Activated CD4-positive, alpha-beta T cell treated with anti-CD3 and anti-CD28 coated beads, Interleukin-2, amount 10 ng/mL, durations not matched to agents 24 days and 14 days (primary cell): ENCODE measurements at regions of chr21 and their contacts with region 1.

Region 1: DNA sequence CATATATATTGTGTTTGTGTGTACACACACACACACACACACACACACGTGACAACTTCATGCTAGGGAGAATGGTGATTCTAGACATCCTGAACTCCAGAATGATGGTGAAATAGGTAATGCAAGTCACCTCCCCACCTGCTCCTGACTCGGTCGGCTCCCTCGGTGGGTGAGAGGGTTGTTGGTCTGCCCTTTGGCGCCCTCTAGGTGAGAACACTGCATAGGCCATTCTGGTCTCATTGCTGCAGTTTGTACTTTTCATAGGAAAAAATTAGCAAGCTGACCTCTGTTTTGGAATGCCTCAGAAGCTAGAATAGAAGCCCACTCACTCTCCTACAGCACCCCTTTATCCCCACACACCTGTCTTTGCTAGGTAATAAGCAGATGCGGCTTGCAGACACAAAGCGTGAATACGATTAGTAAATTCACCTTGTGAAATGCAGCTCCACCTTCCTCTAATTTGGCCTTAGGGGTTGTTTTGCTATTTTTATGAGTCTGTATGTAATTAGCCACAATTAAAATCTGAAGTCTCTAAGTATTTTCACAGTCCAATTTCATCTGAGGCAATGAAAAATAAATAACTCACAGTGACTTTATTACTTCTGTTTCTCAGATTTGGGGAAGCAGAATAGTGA is 130.0 kb upstream of the KCNJ15 start:
- DNase-seq: peak; percentile 85
- H3K4me3 Mint-ChIP-seq: no peak overlapping the region
- H3K27ac Mint-ChIP-seq: no peak overlapping the region
- H3K4me1 Mint-ChIP-seq: no peaks in the 10 kb centered on the region
- H3K27me3 Mint-ChIP-seq: peaks cover 14% of the 10 kb centered on the region

Region 2: GRCh38 chr21:36282568-36283230 is 1844.1 kb before region 1 on chr21:
- intact Hi-C with region 1: no loop called
- DNase-seq: no peak
- H3K4me3 Mint-ChIP-seq: no peak overlapping the region
- H3K27ac Mint-ChIP-seq: no peak overlapping the region
- H3K4me1 Mint-ChIP-seq: peaks cover 5% of the 10 kb centered on the region
- H3K27me3 Mint-ChIP-seq: no peaks in the 10 kb centered on the region

Region 3: GRCh38 chr21:37130971-37131370 is 995.8 kb before region 1 on chr21:
- intact Hi-C with region 1: no loop called
- DNase-seq: no peak
- H3K4me3 Mint-ChIP-seq: no peak overlapping the region
- H3K27ac Mint-ChIP-seq: no peak overlapping the region
- H3K4me1 Mint-ChIP-seq: peaks cover 7% of the 10 kb centered on the region
- H3K27me3 Mint-ChIP-seq: no peaks in the 10 kb centered on the region

Region 4: GRCh38 chr21:37711836-37712568 is 414.8 kb before region 1 on chr21:
- intact Hi-C with region 1: loop called (anchors 5 kb)
- DNase-seq: peak; percentile 78
- H3K4me3 Mint-ChIP-seq: no peak overlapping the region
- H3K27ac Mint-ChIP-seq: no peak overlapping the region
- H3K4me1 Mint-ChIP-seq: no peaks in the 10 kb centered on the region
- H3K27me3 Mint-ChIP-seq: peaks cover 11% of the 10 kb centered on the region

Region 5: DNA sequence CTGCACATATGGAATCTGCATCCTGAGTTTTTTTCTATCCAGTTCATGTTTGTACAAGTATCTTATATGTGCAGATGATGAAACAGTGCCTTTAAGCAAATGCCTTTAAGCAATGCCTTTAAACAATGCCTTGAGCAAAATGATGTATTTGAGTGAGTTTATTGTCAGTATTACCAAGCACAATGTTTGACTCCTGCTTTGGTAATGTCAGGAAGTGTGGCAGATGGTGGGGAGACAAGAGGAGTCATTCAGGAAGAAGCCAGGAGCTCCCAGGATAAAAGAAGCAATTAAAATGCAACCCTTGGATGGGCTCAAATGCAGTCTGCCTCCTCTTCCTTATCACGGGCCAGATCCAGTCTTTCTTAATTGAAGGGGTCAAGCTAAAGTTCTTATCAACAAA is 21.3 kb after region 1 on chr21:
- intact Hi-C with region 1: no loop called
- DNase-seq: no peak
- H3K4me3 Mint-ChIP-seq: no peak overlapping the region
- H3K27ac Mint-ChIP-seq: no peak overlapping the region
- H3K4me1 Mint-ChIP-seq: no peaks in the 10 kb centered on the region
- H3K27me3 Mint-ChIP-seq: peaks cover 17% of the 10 kb centered on the region

Region 6: GRCh38 chr21:38244885-38245545 is 118.2 kb after region 1 on chr21:
- intact Hi-C with region 1: no loop called
- DNase-seq: peak; percentile 88
- H3K4me3 Mint-ChIP-seq: peak overlapping the region; percentile 38
- H3K27ac Mint-ChIP-seq: peak overlapping the region; percentile 89
- H3K4me1 Mint-ChIP-seq: peaks cover 30% of the 10 kb centered on the region
- H3K27me3 Mint-ChIP-seq: peaks cover 7% of the 10 kb centered on the region